ENCODE measurements at regions of chr3 and their contacts with region 1.

Region 1: GRCh38 chr3:64030741-64031140 is 7.4 kb upstream of the PSMD6 start:
- DNase-seq: peak; percentile 69
- CTCF ChIP-seq: peak; percentile 88

Region 2: GRCh38 chr3:62785387-62785982 is 1245.3 kb before region 1 on chr3:
- in situ Hi-C with region 1: no loop called
- DNase-seq: no peak
- CTCF ChIP-seq: no peak

Region 3: DNA sequence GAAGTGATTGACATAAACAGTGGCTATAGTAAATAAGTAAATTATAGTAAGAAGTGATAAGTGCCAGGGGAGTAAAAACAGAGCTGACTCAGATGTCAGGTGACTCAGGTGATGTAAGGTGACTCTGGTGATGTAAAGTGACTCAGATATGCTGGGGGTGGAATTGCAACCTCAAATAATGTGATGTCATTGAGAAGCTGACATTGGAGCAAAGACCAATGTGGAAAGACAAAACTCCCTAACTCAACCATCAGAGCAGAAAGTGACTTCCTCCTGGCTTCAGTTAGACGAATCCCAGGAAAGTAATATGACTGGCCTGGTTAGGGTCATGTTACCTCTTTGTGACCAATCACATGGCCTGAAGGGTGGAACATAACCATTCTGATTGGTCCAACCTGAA is 522.4 kb before region 1 on chr3:
- in situ Hi-C with region 1: no loop called
- DNase-seq: no peak
- CTCF ChIP-seq: no peak

Region 4: GRCh38 chr3:64121750-64122311 is 91.1 kb after region 1 on chr3:
- in situ Hi-C with region 1: no loop called
- DNase-seq: no peak
- CTCF ChIP-seq: no peak

Region 5: DNA sequence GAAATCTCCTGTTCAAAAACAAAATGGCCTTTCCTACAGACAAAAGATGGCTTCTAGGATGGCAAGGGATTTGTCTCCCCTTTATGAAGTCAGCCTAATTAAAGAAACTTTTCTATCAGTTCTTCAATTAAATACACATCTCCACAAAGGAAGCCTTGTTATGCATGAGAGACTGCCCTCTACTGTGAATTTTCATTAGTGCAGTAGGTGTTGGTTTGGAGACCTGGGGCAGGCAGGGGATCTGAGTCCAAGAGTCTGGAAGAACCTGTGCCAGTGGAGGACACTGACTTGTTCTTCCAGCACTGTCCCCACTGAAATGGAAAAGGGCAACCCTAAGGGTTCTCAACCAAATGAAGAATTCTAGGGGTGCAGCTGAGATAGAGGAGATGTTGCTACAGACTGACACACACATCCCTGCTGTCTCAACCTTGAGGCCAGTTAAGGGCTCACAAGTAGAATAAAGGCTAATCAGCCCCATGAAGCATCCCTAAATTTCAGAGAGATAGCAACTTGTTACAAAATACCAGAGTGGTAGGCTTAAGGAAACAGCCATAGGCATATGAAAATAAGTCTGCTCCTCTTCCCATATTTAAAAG is 368.6 kb after region 1 on chr3:
- in situ Hi-C with region 1: loop called (anchors 25 kb)
- DNase-seq: peak; percentile 27
- CTCF ChIP-seq: peak; percentile 68

Region 6: GRCh38 chr3:64431526-64432091 is 400.9 kb after region 1 on chr3:
- in situ Hi-C with region 1: no loop called
- DNase-seq: no peak
- CTCF ChIP-seq: no peak

Region 7: DNA sequence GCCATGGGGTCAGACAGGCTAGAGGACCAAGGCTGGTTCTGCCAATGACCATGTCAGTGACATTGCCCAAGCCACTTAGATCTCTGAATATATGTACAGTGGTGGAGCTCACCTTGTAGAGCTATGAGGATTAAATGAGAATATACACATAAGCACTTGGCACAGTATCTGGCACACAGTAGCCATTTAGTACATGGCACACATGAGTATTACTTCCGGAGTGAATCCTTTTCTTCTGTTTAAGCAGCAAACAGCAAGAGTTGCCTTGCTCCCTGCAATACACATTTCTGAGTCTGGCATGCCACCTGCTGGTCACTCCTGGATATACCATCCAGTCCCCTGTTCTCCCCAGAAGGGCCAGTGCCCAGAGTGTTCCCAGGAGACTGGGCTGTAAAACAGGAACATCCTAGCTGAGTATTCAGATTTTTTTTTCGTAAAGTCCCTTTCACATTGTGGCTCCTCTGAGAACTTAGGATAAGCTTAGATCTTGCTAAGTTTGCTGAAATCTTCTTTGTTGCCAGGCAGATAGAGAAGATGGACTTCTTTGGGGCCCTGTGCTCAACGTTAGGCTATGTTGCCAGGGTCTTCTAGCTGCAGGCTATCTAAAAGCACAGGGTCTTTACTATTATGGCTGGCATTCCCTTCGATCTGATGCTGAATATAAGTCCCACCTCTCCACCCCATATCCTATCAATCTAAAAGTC is 453.7 kb after region 1 on chr3:
- in situ Hi-C with region 1: loop called (anchors 5 kb)
- DNase-seq: peak; percentile 64
- CTCF ChIP-seq: peak; percentile 81

Measured in GM13977 (cell line).